Right ventricle myocardium inferior (tissue), 1 donor: ENCODE measurements at regions of chr2 and their contacts with region 1.

Region 1: DNA sequence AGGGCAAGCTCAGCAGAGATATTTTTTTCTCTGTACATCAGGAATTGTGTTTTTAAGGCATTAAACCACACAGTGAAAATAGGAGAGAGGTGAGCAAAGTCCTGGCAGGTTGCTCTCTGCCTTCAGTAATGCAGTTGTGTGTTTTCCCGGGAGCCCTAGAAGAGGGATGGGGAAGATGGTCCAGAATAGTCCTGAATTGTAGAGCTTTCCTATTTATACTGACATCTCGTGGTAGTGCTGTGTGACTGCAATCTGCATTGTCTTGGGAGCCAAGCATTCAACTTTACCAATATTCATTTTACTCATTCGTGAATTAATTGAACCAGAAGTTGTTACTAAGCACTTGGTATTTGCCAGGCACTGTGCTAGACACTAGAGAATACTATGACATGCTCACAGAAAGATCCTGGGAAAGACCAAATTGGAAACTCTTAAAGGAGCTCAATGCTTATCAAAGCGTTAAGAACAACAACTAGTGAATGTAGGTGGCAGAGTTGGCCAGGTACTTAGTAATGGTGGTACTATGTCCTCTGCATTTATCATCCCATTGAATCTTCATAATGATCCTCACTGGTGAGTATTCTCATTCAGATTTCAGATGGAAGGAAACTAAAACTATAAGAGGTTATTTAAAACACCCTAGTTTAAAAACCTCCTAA is 214.6 kb downstream of the TRIB2 start:
- DNase-seq: no peak
- ATAC-seq: peak; percentile 86

Region 2: DNA sequence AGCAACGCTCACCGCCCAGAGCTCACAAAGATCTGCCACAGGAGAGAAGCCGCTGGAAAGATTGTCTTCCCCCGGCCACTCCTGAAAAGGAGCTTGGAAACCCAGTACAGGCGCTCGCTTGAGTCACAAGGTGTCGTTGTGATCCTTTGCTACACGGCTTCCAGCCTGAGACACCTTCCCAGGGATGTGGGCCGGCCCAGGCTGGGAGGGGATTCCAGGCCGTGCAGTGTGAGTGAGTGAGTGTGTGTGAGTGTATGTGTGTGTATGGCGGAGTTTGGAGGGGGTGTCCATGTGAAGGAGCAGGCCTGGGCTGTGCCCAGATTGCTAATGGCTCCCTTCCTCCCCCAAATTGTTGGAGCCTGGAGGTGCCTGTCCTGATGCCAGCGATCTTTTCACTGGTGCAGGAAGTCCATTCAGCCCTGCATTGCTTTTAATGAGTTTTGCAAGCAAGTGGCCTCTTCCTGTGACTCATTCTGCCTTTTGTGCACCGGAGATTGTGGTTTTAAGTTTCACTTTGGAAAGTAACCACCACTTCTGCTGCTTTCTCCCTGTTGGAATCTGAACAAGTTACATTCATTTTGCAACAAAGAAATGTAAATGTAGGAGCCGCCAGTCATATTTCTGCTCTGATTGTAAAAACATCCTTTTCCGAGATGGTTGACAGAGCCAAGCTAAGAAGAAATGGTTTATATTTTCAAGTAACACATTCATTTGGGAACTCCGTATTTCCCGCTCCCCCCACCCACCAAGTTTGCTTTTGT is 1101.2 kb before region 1 on chr2:
- intact Hi-C with region 1: loop called (anchors 5 kb)
- DNase-seq: peak; percentile 73
- ATAC-seq: peak; percentile 83

Region 3: GRCh38 chr2:12416600-12416999 is 514.7 kb before region 1 on chr2:
- intact Hi-C with region 1: loop called (anchors 10 kb)
- DNase-seq: peak; percentile 72
- ATAC-seq: peak; percentile 45

Region 4: DNA sequence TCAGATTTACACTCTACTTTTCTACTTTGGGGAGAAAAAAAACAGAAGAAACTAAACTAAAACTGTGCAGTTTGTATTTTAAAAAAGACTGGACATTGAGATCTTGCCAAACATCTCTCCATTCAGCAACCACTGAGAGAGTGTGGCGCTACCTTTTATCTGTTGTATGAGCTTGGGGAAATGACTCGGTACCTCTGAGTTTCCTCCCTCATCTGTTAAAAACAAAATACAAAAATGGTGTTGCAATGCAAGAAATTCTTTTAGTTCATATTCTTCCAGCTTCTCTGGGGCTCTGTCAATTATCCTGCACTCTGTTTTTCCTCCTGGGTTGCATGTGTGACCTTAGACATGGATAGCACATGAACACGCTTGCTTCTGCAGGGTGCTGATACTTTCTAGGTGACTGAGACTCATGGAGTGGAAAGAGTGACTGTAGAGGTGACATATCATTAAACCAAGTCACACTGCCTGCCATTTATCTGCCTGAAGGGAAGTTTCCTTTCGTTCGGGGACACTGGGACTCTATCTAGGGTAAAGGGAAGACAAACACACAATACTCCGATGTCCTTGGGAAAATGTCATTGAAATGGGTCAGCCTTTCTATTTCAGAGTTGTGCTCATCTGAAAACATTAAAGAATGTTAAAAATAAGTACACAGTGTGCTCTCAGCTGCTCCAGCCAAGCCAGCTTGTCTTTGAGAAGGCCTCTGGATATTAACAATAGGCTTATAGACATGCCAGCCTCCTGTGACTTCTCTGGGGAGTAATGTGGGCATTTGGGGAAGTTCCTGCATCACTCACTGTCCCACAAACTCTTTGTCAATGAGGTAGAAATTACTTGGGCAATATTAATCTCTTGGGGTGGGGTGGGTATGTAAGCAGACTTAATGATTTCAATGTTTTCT is 123.2 kb before region 1 on chr2:
- intact Hi-C with region 1: loop called (anchors 2 kb)
- DNase-seq: no peak
- ATAC-seq: peak; percentile 84

Region 5: GRCh38 chr2:12897181-12897580 is 34.1 kb before region 1 on chr2:
- intact Hi-C with region 1: no loop called
- DNase-seq: no peak
- ATAC-seq: no peak

Region 6: DNA sequence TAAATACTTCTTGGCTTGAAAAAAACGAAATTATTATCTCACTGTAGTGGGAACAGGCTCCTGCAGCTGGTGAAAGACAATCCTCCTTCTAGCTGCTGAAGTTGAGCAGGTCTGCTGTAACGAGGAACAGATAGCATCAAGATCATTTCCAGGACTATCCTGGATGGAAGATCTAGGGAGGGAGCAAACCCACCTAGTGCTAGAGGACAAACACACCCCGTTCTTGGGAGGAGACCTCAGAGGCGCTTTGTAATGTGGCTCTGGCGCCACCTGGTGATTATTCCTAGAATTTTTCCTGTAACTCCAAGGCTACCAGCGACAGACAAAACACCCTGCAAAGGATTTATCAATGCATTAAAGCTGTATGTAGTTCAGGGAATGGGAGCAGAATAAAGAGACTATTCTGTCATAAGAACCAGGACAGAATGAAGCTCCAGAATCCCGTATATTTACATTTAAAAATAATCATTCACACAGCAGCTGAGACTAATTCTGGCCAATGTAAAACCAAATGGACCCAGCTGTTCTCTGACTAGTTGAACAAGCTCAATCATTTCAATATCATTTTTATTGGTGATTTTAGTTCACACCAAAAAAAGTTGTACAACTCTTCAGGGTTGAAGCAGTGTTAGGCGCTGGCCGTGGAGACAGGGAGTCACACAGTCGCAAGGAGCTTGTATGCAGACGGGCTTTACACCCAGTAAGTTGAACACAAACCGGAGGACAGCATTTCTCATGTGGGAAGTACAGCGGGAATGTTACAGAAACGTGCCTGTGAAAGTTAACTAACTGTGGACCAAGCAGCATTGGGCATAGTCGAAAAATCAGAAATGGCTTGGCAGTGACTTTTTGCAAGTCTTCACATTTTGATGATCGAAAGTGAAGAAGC is 75.8 kb after region 1 on chr2:
- intact Hi-C with region 1: loop called (anchors 5 kb)
- DNase-seq: no peak
- ATAC-seq: peak; percentile 90